ENCODE measurements at regions of chr16 and their contacts with region 1.

Region 1: DNA sequence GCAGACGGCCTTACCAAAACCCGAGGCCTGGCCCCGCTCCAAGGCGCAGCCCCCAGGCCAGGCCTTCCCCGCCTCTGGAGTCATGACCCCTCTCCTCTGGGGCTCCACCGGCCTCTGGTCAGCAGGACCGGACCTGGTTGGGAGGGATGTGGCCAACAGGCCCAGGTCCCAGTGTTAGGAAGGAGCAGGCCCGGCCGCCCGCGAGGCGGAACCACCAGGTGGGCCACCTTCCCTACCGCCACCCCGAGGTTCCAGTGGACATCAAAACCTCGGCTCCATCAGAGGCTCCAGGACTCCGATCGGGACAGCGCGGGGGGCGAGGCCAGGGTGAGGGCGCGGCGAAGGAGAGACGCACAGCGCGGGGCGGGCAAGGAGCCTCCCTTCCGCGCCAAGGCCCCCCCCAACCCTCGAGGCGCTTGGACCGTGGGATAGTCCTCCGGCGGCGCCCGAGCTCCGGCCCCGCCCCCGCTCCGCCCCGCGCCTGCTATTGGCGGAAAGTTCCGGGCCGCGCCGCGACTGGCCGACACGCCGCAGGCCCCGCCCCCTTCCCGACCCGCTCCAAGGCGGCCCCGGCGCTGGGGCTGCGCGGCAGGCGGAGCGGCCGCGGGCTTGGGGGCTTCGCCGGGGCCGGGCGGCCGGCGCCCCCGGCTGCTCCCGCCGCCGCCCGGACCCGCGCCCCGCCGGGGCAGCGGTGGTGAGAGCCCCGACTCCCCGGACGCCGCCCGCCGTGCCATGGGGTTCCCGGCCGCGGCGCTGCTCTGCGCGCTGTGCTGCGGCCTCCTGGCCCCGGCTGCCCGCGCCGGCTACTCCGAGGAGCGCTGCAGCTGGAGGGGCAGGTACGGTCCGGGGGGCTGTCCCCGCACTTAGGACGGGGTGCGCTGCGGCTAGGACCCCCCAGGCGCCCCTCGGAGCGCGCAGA is at the start of gene METRN:
- DNase-seq: peak; percentile 67 to 97 (median 82)
- ATAC-seq: peak; percentile 95
- H3K4me3 ChIP-seq: peak within 1 kb of the TSS; percentile 30
- H3K4me3 Mint-ChIP-seq: peak within 1 kb of the TSS in 9 of 10 donors; percentile 27 to 81 (median 61)
- H3K27ac ChIP-seq: no peak within 1 kb of the TSS
- H3K27ac Mint-ChIP-seq: peak within 1 kb of the TSS in 1 of 9 donors; percentile 11
- H3K4me1 ChIP-seq: peaks cover 5 to 7% of the 10 kb centered on the region in 2 donors
- H3K4me1 Mint-ChIP-seq: peaks cover 0 to 17% (median 12%) of the 10 kb centered on the region in 7 donors
- H3K27me3 ChIP-seq: peaks cover 0 to 4% of the 10 kb centered on the region in 2 donors
- H3K27me3 Mint-ChIP-seq: peaks cover 0 to 28% (median 5%) of the 10 kb centered on the region in 5 donors
- total RNA-seq, gene METRN: 4.8 to 5.1 (median 5.0) TPM

Region 2: GRCh38 chr16:430904-431303 is 283.9 kb before region 1 on chr16:
- CTCF ChIA-PET with region 1: no interaction called
- POLR2A ChIA-PET with region 1: no interaction called
- intact Hi-C with region 1: no loop called
- DNase-seq: no peak
- ATAC-seq: no peak
- H3K4me3 ChIP-seq: no peak overlapping the region
- H3K4me3 Mint-ChIP-seq: no peak overlapping the region
- H3K27ac ChIP-seq: no peak overlapping the region
- H3K27ac Mint-ChIP-seq: no peak overlapping the region
- H3K4me1 ChIP-seq: peaks cover 4 to 12% of the 10 kb centered on the region in 2 donors
- H3K4me1 Mint-ChIP-seq: peaks cover 19 to 40% (median 26%) of the 10 kb centered on the region in 7 donors
- H3K27me3 ChIP-seq: no peaks in the 10 kb centered on the region
- H3K27me3 Mint-ChIP-seq: peaks cover 0 to 3% (median 0%) of the 10 kb centered on the region in 5 donors

Region 3: GRCh38 chr16:728131-728889 is 13.5 kb after region 1 on chr16:
- CTCF ChIA-PET with region 1: interaction called, 12 read pairs
- POLR2A ChIA-PET with region 1: interaction called, 11 read pairs
- intact Hi-C with region 1: loop called in 1 of 2 experiments (anchors 1 kb)
- DNase-seq: peak in 7 of 9 donors; percentile 46 to 64 (median 55)
- ATAC-seq: peak; percentile 85
- H3K4me3 ChIP-seq: peak overlapping the region; percentile 39
- H3K4me3 Mint-ChIP-seq: peak overlapping the region in 5 of 10 donors; percentile 25 to 87 (median 42)
- H3K27ac ChIP-seq: peak overlapping the region; percentile 21
- H3K27ac Mint-ChIP-seq: no peak overlapping the region
- H3K4me1 ChIP-seq: peaks cover 0 to 12% of the 10 kb centered on the region in 2 donors
- H3K4me1 Mint-ChIP-seq: no peaks in the 10 kb centered on the region
- H3K27me3 ChIP-seq: no peaks in the 10 kb centered on the region
- H3K27me3 Mint-ChIP-seq: peaks cover 0 to 6% (median 0%) of the 10 kb centered on the region in 5 donors

Region 4: DNA sequence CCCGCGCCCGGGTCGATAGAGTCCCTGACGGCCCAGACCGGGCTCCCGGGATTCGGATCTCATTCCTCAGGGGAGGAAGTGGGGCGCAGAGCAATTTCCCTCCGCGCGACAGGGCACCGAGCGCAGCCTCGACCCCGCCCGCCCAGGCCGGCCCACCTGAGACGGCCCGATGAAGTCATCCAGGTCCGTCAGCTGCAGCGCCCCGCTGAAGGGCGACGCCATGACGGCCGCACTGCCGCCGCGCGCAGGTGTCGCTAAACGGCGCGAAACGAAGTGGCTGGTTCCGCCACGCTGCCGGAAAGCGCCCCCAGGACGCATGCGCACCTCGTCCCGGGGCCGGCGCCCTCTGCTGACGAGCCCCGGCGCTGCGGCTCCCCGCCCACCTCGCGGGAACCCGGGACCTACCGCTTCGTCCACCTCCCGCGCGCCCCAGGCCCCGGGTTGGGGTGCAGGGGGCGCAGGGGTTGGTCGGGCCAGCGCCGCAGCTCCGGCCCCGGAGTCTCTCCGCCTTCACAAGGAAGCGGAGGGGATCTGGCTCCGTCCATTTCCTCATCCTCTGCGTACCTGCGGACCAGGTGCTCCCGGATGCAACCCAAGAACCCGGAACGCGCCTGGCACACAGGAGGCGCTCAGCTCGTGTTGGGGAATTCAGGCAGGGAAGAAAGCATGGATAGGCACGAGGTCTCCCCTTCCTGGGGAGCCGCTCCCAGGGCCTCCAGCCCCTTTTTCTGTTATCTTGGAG is 26.1 kb after region 1 on chr16 and contains the start of gene CIAO3:
- CTCF ChIA-PET with region 1: interaction called, 15 read pairs
- POLR2A ChIA-PET with region 1: interaction called, 3 read pairs
- intact Hi-C with region 1: loop called (anchors 1 kb)
- DNase-seq: peak; percentile 85 to 99 (median 91)
- ATAC-seq: peak; percentile 93
- H3K4me3 ChIP-seq: peak within 1 kb of the TSS; percentile 81
- H3K4me3 Mint-ChIP-seq: peak within 1 kb of the TSS; percentile 63 to 85 (median 80)
- H3K27ac ChIP-seq: peak within 1 kb of the TSS; percentile 86
- H3K27ac Mint-ChIP-seq: peak within 1 kb of the TSS in 7 of 9 donors; percentile 26 to 81 (median 77)
- H3K4me1 ChIP-seq: peaks cover 4 to 10% of the 10 kb centered on the region in 2 donors
- H3K4me1 Mint-ChIP-seq: peaks cover 0 to 16% (median 5%) of the 10 kb centered on the region in 7 donors
- H3K27me3 ChIP-seq: no peaks in the 10 kb centered on the region
- H3K27me3 Mint-ChIP-seq: no peaks in the 10 kb centered on the region
- total RNA-seq, gene CIAO3: 39.0 to 55.5 (median 46.1) TPM

Region 5: GRCh38 chr16:970766-971581 is 256.2 kb after region 1 on chr16 and contains the start of gene LMF1:
- CTCF ChIA-PET with region 1: no interaction called
- POLR2A ChIA-PET with region 1: no interaction called
- intact Hi-C with region 1: loop called in 1 of 2 experiments (anchors 10 kb)
- DNase-seq: peak; percentile 92 to 100 (median 96)
- ATAC-seq: peak; percentile 100
- H3K4me3 ChIP-seq: peak within 1 kb of the TSS; percentile 79
- H3K4me3 Mint-ChIP-seq: peak within 1 kb of the TSS; percentile 67 to 88 (median 76)
- H3K27ac ChIP-seq: peak within 1 kb of the TSS; percentile 82
- H3K27ac Mint-ChIP-seq: peak within 1 kb of the TSS in 8 of 9 donors; percentile 58 to 90 (median 78)
- H3K4me1 ChIP-seq: peaks cover 6 to 19% of the 10 kb centered on the region in 2 donors
- H3K4me1 Mint-ChIP-seq: peaks cover 12 to 40% (median 29%) of the 10 kb centered on the region in 7 donors
- H3K27me3 ChIP-seq: no peaks in the 10 kb centered on the region
- H3K27me3 Mint-ChIP-seq: peaks cover 0 to 7% (median 0%) of the 10 kb centered on the region in 5 donors
- total RNA-seq, gene LMF1: 25.9 to 63.1 (median 43.1) TPM

Region 6: DNA sequence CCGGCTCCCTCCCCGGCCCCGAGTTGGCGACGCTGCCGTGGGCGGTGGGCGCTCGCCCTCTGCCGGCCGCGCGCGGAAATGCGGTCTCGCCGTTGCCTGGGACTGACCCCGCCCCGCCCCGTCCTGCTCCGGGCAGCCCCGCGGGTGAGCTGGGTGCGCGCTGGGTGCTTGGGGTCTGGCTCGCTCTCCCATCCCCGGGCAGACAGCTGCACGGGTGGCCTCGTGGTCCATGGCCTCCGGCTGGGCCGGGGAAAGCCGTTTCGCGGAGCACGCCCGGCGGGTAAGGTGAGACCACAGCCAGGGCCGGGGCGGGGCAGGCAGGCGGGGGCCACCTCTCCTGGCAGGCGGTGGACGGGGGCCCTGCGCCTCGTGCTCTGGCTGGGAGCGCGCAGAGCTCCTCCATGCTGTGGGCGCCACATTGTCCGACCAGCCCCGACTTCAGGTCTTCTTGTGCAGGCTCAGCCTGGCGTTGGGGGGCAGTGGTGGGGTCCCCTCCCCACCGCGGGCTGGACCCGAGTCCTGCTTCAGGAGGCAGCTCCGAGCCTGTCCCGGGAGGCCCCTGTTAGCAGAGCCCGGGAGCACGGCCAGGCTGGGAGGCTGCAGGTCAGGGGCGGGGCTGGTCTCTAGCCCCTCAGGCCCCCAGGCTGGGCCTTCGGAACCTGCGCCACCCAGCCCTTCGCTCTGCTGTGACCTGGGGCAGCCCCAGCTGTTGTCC is 388.3 kb after region 1 on chr16:
- CTCF ChIA-PET with region 1: no interaction called
- POLR2A ChIA-PET with region 1: no interaction called
- intact Hi-C with region 1: loop called (anchors 1 to 2 kb)
- DNase-seq: peak; percentile 32 to 83 (median 62)
- ATAC-seq: peak; percentile 82
- H3K4me3 ChIP-seq: no peak overlapping the region
- H3K4me3 Mint-ChIP-seq: no peak overlapping the region
- H3K27ac ChIP-seq: no peak overlapping the region
- H3K27ac Mint-ChIP-seq: no peak overlapping the region
- H3K4me1 ChIP-seq: no peaks in the 10 kb centered on the region
- H3K4me1 Mint-ChIP-seq: no peaks in the 10 kb centered on the region
- H3K27me3 ChIP-seq: no peaks in the 10 kb centered on the region
- H3K27me3 Mint-ChIP-seq: peaks cover 0 to 11% (median 4%) of the 10 kb centered on the region in 5 donors

Region 7: DNA sequence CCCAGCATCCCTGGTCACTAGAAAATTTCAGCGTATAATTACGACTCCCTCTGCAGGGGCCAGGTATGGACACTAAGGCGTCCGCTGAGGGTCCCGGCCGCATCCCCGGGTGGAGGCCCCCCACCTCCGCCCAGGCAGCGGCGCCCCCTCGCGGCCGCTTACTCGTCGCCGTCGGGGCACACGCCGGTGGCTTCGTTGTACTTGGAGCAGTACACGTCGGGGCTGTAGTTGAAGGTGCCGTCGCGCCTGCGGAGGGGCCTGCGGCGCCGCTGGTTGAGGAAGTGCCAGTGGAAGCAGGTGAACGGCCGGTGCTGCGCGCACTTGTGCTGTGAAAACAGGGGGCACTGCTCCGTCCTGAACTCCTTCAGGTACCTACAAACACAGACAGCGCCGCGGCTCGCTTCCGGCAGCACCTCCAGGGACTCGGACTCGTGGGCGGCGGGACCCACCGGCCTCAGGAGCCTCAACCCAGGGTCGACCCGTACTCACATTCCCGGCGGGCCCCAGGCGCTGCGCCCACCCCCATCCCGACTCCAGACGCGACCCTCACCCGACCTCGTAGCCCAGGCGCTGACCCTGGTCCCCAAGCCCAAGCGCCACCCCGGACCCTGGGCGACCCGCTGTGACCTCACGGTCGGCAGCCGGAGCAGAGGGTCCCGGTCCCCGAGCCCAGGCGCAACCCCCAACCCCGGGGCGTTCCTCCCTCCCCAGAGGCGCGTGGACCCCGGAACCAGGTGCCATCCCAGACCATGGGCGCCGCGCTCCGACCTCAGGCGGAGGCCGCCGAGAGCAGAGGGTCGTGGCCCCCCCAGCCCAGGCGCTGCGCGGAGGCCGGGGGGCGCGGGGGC is 699.1 kb after region 1 on chr16:
- CTCF ChIA-PET with region 1: no interaction called
- POLR2A ChIA-PET with region 1: no interaction called
- intact Hi-C with region 1: no loop called
- DNase-seq: peak; percentile 44 to 77 (median 57)
- ATAC-seq: peak; percentile 66
- H3K4me3 ChIP-seq: peak overlapping the region; percentile 79
- H3K4me3 Mint-ChIP-seq: peak overlapping the region; percentile 75 to 91 (median 85)
- H3K27ac ChIP-seq: peak overlapping the region; percentile 89
- H3K27ac Mint-ChIP-seq: peak overlapping the region; percentile 70 to 92 (median 88)
- H3K4me1 ChIP-seq: peaks cover 0 to 8% of the 10 kb centered on the region in 2 donors
- H3K4me1 Mint-ChIP-seq: peaks cover 0 to 33% (median 26%) of the 10 kb centered on the region in 7 donors
- H3K27me3 ChIP-seq: no peaks in the 10 kb centered on the region
- H3K27me3 Mint-ChIP-seq: no peaks in the 10 kb centered on the region

Measured in naive thymus-derived CD4-positive, alpha-beta T cell (primary cell).